GM12878 (cell line): ENCODE measurements at regions of chr2 and their contacts with region 1.

Region 1: GRCh38 chr2:31219131-31219969 is 2.0 kb upstream of the CAPN14 start:
- DNase-seq: peak; percentile 79
- ATAC-seq: peak; percentile 80
- H3K4me3 ChIP-seq: 0 out of 2 replicates have a peak overlapping the region, but pooled peaks have one; percentile 2
- H3K27ac ChIP-seq: peak overlapping the region; percentile 52
- H3K4me1 ChIP-seq: peaks cover 50% of the 10 kb centered on the region
- H3K27me3 ChIP-seq: no peaks in the 10 kb centered on the region
- CTCF ChIP-seq: no peak
- EP300 ChIP-seq: peak; percentile 28 to 48; a peak in 3 of 4 replicates
- POLR2A ChIP-seq: no peak
- RAD21 ChIP-seq: no peak

Region 2: GRCh38 chr2:31138037-31138962 is 81.0 kb before region 1 on chr2 and contains the start of gene GALNT14:
- CTCF ChIA-PET with region 1: no interaction called
- POLR2A ChIA-PET with region 1: no interaction called
- RAD21 ChIA-PET with region 1: no interaction called
- SMC1A ChIA-PET with region 1: no interaction called
- in situ Hi-C with region 1: no loop called
- intact Hi-C with region 1: no loop called
- DNase-seq: no peak
- ATAC-seq: peak; percentile 82
- H3K4me3 ChIP-seq: peak within 1 kb of the TSS; percentile 32; the same call in 1 of the 2 replicates
- H3K27ac ChIP-seq: no peak within 1 kb of the TSS
- H3K4me1 ChIP-seq: no peaks in the 10 kb centered on the region; the same call in 1 of the 2 replicates
- H3K27me3 ChIP-seq: peaks cover 2 to 27% of the 10 kb centered on the region in 2 experiments
- CTCF ChIP-seq: peak; percentile 25 to 50 (median 41); a peak in 4 of 6 replicates
- EP300 ChIP-seq: no peak
- POLR2A ChIP-seq: no peak
- RAD21 ChIP-seq: no peak
- polyA plus RNA-seq, gene GALNT14: 3.7 to 4.1 TPM

Region 3: DNA sequence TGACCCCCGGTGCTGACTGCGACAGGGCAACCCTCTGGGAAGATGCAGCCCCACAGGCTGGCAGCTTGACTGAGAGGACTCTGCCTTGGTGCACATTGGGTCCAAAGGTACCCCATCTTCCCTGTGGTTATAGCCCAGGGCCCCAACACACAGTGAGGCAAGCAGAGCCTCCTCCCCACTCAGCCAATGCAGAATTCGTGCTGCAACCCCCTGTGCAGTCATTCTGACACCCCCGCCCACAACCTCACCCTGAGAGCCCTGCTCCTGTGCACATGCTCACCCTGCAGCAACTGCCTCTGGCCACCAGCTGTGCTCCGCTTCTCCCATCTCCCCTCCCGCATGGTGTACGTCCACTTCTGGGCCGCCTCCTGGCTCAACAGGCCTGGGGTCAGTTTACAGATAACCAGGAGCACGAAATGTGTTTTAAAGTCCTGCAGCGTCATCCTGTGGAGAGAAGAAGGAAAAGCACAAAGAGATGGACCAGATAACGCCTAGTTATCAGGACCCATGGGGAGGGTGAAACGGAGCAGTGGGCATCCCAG is 26.4 kb before region 1 on chr2:
- CTCF ChIA-PET with region 1: no interaction called
- POLR2A ChIA-PET with region 1: no interaction called
- RAD21 ChIA-PET with region 1: no interaction called
- SMC1A ChIA-PET with region 1: no interaction called
- in situ Hi-C with region 1: no loop called
- intact Hi-C with region 1: no loop called
- DNase-seq: no peak
- ATAC-seq: no peak
- H3K4me3 ChIP-seq: no peak overlapping the region
- H3K27ac ChIP-seq: no peak overlapping the region
- H3K4me1 ChIP-seq: no peaks in the 10 kb centered on the region
- H3K27me3 ChIP-seq: no peaks in the 10 kb centered on the region
- CTCF ChIP-seq: no peak
- EP300 ChIP-seq: no peak
- POLR2A ChIP-seq: no peak
- RAD21 ChIP-seq: no peak

Region 4: GRCh38 chr2:31207790-31208189 is 11.6 kb before region 1 on chr2:
- CTCF ChIA-PET with region 1: interaction called, 14 read pairs
- POLR2A ChIA-PET with region 1: interaction called, 4 read pairs
- RAD21 ChIA-PET with region 1: interaction called, 6 read pairs
- SMC1A ChIA-PET with region 1: interaction called, 12 read pairs
- in situ Hi-C with region 1: no loop called
- intact Hi-C with region 1: no loop called
- DNase-seq: no peak
- ATAC-seq: peak; percentile 83
- H3K4me3 ChIP-seq: no peak overlapping the region
- H3K27ac ChIP-seq: no peak overlapping the region
- H3K4me1 ChIP-seq: peaks cover 4% of the 10 kb centered on the region; the same call in 1 of the 2 replicates
- H3K27me3 ChIP-seq: no peaks in the 10 kb centered on the region
- CTCF ChIP-seq: peak in 1 of 3 experiments; percentile 16; a peak in 2 of 6 replicates
- EP300 ChIP-seq: no peak
- POLR2A ChIP-seq: no peak
- RAD21 ChIP-seq: no peak

Region 5: DNA sequence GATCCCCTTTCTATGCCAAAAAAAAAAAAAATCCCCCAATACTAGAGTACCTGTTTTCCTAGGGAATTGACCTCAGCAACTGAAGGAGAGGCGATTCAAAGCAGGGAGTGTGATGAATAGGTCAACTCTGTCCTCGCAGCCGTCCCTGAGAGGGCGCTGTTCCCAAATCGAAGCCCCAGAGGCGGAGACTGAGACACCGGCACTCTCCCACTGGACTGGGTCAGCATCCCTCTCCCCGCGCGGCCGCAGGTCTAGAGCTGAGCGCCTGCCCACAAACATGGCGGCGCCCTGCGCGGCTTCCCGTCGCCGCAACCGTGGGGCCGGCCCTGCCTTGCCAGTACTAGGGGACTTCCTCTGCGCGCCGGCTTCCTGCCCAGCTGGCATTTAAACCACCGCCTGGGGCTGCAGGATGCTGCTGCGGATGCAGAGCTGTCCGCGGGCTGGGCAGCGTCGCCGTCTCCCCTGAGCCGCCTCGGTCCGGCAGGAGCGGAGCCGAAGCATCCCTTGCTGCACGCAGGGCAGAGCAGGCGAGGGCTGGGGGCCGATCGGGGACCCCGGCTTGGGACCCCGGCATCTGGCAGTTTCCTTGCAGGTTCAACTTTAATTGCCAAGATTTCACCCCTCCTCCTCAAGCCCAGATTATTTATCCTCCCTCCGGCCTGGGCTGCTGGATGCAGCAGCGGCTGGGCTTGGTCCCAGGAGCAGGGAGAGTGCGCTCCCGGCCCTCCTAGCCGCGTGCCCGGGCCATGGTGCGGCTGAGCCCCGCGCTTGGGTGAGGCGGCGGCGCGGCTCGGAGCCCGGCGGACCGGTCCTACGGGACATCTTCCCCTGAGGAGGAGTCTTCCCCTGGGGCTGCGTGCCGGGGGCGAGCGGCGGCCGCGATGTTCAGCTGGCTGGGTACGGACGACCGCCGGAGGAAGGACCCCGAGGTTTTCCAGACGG is 14.7 kb after region 1 on chr2 and contains the start of gene EHD3:
- CTCF ChIA-PET with region 1: interaction called, 13 read pairs
- POLR2A ChIA-PET with region 1: interaction called, 3 read pairs
- RAD21 ChIA-PET with region 1: interaction called, 3 read pairs
- SMC1A ChIA-PET with region 1: interaction called, 6 read pairs
- in situ Hi-C with region 1: no loop called
- intact Hi-C with region 1: no loop called
- DNase-seq: no peak
- ATAC-seq: peak; percentile 99
- H3K4me3 ChIP-seq: peak within 1 kb of the TSS; percentile 48
- H3K27ac ChIP-seq: no peak within 1 kb of the TSS
- H3K4me1 ChIP-seq: no peaks in the 10 kb centered on the region; the same call in 1 of the 2 replicates
- H3K27me3 ChIP-seq: no peaks in the 10 kb centered on the region
- CTCF ChIP-seq: peak; percentile 32 to 61 (median 59); a peak in 5 of 6 replicates
- EP300 ChIP-seq: no peak
- POLR2A ChIP-seq: peak; percentile 54; the same call in 1 of the 2 replicates
- RAD21 ChIP-seq: peak; percentile 48; the same call in 1 of the 2 replicates
- polyA plus RNA-seq, gene EHD3: 1.1 to 1.5 TPM